MCF 10A (cell line): ENCODE measurements at regions of chr9 and their contacts with region 1.

Region 1: DNA sequence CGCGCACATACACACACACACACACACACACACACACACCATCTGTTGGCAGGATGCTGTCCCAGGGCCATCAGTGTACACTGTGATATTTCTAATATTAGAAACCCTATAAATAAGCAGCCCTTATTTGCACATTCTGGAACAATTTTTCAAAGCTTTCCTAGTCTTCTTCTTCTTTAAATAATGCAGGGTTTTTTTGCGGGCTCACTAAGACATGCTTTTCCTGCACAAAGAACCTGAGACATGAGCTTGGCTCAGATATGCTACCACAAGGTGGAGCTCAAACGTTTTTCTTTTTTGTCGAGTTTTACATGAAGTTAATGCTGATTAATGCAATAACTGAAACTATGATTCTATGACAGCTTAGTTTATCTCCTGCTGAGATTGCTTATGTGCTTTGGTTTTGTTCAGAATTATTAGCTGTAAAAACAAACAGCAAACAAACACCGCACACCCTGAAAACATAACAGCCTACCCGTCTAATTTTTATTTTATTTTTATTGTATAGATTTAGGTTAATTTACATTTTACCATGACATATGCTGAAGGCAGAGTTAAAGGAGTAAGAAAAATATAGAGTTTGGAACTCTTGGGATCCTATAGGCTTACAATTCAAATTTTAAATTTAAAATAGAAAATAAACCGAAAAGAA is 95.8 kb downstream of the ALDH1A1 start:
- DNase-seq: peak; percentile 64
- H3K4me3 Mint-ChIP-seq: no peak overlapping the region
- H3K27ac Mint-ChIP-seq: no peak overlapping the region
- H3K4me1 Mint-ChIP-seq: no peaks in the 10 kb centered on the region
- H3K27me3 Mint-ChIP-seq: peaks cover 9% of the 10 kb centered on the region
- CTCF ChIP-seq: peak; percentile 41

Region 2: DNA sequence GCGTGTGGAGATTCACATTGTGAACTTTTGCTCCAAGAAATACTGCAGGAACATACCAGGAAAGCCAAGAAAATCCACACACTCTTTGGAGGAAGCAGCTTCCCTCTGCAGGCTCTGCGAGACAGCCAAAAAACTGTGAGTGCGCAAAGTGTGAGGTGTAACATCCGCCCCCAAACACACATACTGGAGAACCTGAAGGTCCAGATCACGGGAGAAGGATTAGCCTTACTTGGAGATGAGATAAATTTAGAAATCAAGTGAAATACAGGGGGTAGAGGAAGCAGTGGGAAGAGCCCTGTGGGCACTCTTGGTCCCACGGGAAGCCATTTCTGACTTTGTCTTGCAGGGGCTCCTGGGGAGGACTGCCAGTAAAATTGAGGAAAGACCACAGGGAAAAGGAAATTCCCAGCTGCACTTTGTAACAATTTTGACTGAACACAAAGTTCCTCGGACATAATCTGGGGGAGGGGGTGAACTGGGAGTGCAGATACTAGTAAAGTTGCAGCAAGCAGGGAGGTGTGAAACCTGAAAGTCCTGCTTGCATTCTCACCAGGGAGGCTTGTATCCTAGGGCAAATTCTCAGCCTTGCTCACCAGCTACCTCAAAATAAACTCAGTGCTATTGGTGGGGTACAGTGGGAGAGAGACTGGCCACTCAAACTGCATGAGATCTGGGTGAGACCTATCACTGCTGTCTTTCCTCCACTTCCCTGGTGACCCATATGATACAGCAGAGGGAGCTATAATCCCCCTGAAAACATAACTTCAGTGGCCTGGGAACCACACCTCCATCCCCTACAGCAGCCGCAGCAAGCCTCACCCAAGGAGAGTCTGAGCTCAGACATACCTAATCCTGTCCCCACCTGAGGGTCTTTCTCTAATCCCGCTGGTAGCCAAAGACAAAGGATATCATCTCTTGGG is 13.3 kb before region 1 on chr9:
- CTCF ChIA-PET with region 1: interaction called, 10 read pairs
- POLR2A ChIA-PET with region 1: no interaction called
- intact Hi-C with region 1: no loop called
- DNase-seq: peak; percentile 12
- H3K4me3 Mint-ChIP-seq: no peak overlapping the region
- H3K27ac Mint-ChIP-seq: no peak overlapping the region
- H3K4me1 Mint-ChIP-seq: no peaks in the 10 kb centered on the region
- H3K27me3 Mint-ChIP-seq: peaks cover 50% of the 10 kb centered on the region
- CTCF ChIP-seq: no peak

Region 3: GRCh38 chr9:72871685-72872084 is 14.6 kb after region 1 on chr9:
- CTCF ChIA-PET with region 1: interaction called, 26 read pairs
- POLR2A ChIA-PET with region 1: no interaction called
- intact Hi-C with region 1: no loop called
- DNase-seq: peak; percentile 43
- H3K4me3 Mint-ChIP-seq: no peak overlapping the region
- H3K27ac Mint-ChIP-seq: no peak overlapping the region
- H3K4me1 Mint-ChIP-seq: no peaks in the 10 kb centered on the region
- H3K27me3 Mint-ChIP-seq: peaks cover 22% of the 10 kb centered on the region
- CTCF ChIP-seq: peak; percentile 61

Region 4: GRCh38 chr9:73009649-73010288 is 152.7 kb after region 1 on chr9:
- CTCF ChIA-PET with region 1: interaction called, 11 read pairs
- POLR2A ChIA-PET with region 1: no interaction called
- intact Hi-C with region 1: no loop called
- DNase-seq: no peak
- H3K4me3 Mint-ChIP-seq: no peak overlapping the region
- H3K27ac Mint-ChIP-seq: no peak overlapping the region
- H3K4me1 Mint-ChIP-seq: no peaks in the 10 kb centered on the region
- H3K27me3 Mint-ChIP-seq: peaks cover 82% of the 10 kb centered on the region
- CTCF ChIP-seq: no peak

Region 5: GRCh38 chr9:73023025-73023541 is 166.0 kb after region 1 on chr9:
- CTCF ChIA-PET with region 1: interaction called, 58 read pairs
- POLR2A ChIA-PET with region 1: interaction called, 4 read pairs
- intact Hi-C with region 1: loop called (anchors 5 kb)
- DNase-seq: peak; percentile 81
- H3K4me3 Mint-ChIP-seq: no peak overlapping the region
- H3K27ac Mint-ChIP-seq: no peak overlapping the region
- H3K4me1 Mint-ChIP-seq: no peaks in the 10 kb centered on the region
- H3K27me3 Mint-ChIP-seq: peaks cover 72% of the 10 kb centered on the region
- CTCF ChIP-seq: peak; percentile 78

Region 6: GRCh38 chr9:73081979-73082657 is 225.0 kb after region 1 on chr9:
- CTCF ChIA-PET with region 1: interaction called, 23 read pairs
- POLR2A ChIA-PET with region 1: no interaction called
- intact Hi-C with region 1: loop called (anchors 5 kb)
- DNase-seq: peak; percentile 53
- H3K4me3 Mint-ChIP-seq: no peak overlapping the region
- H3K27ac Mint-ChIP-seq: no peak overlapping the region
- H3K4me1 Mint-ChIP-seq: no peaks in the 10 kb centered on the region
- H3K27me3 Mint-ChIP-seq: peaks cover 71% of the 10 kb centered on the region
- CTCF ChIP-seq: peak; percentile 54

Region 7: GRCh38 chr9:73132034-73132776 is 275.1 kb after region 1 on chr9:
- CTCF ChIA-PET with region 1: no interaction called
- POLR2A ChIA-PET with region 1: no interaction called
- intact Hi-C with region 1: no loop called
- DNase-seq: peak; percentile 90
- H3K4me3 Mint-ChIP-seq: peak overlapping the region; percentile 76
- H3K27ac Mint-ChIP-seq: peak overlapping the region; percentile 97
- H3K4me1 Mint-ChIP-seq: peaks cover 31% of the 10 kb centered on the region
- H3K27me3 Mint-ChIP-seq: no peaks in the 10 kb centered on the region
- CTCF ChIP-seq: no peak

Region 8: GRCh38 chr9:73183917-73184861 is 327.1 kb after region 1 on chr9:
- CTCF ChIA-PET with region 1: interaction called, 9 read pairs
- POLR2A ChIA-PET with region 1: no interaction called
- intact Hi-C with region 1: loop called (anchors 5 kb)
- DNase-seq: peak; percentile 59
- H3K4me3 Mint-ChIP-seq: no peak overlapping the region
- H3K27ac Mint-ChIP-seq: no peak overlapping the region
- H3K4me1 Mint-ChIP-seq: no peaks in the 10 kb centered on the region
- H3K27me3 Mint-ChIP-seq: peaks cover 42% of the 10 kb centered on the region
- CTCF ChIP-seq: peak; percentile 48